ENCODE measurements at regions of chr17 and their contacts with region 1.

Region 1: DNA sequence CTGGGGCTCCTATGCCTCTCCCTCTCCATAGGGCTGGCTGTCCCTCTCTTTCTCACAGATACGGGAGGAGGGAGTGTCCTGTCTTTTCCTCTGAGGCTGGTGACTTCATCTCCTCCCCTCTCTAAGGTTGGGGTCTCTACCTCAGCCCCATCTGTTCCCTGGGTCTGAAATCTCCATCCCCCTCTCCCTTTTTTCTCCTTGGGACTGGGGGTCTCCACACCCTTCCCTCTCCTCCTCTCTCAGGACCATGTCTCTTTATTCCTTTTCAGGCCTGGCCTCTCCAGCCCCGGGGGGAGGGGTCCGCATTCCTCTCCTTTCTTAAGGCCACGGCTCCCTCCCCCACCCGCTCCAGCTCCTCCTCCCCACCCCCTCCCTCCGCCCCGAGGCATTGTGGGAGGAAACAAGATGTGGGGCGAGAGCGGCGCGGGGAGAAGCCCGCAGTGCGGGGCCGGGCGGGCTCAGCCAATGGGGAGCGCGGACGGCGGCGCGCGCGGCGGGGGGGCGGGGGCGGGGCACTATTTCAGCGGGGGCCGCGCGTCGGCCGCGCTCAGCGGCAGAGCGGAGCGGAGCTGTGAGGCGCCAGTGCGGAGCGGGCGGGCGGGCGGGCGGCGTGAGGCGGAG is at the start of gene DYNLL2:
- DNase-seq: peak; percentile 97
- H3K4me3 ChIP-seq: peak within 1 kb of the TSS; percentile 80 to 99 (median 98)
- H3K27ac ChIP-seq: peak within 1 kb of the TSS; percentile 93 to 99 (median 98)
- H3K4me1 ChIP-seq: peaks cover 0 to 46% (median 38%) of the 10 kb centered on the region in 4 donors
- H3K27me3 ChIP-seq: no peaks in the 10 kb centered on the region
- CTCF ChIP-seq: no peak
- EP300 ChIP-seq: no peak
- POLR2A ChIP-seq: no peak
- total RNA-seq, gene DYNLL2: 19.4 to 28.9 (median 22.8) TPM

Region 2: DNA sequence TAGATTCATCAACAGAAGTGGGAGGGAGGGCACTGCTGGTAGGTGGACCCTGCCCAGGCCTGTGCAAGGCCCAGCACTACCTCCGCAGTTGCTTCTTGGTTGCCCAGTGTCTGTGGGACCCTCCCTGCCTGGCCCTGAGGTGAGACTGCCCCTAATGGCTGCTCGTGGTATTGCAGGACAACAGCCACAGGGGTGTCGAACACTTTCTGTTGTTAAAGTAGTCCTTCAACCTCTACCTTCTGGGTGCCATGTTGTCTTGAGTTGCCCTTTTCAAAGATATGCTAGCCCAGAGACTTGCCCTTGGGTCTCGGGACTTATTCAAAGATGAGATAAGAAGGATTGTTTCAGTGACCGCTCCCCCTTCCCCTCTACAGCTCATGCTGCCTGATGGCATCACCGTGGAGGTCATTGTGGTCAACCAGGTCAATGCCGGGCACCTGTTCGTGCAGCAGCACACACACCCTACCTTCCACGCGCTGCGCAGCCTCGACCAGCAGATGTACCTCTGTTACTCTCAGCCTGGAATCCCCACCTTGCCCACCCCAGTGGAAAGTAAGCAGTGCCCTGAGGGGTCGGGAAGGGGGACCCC is 968.8 kb before region 1 on chr17:
- intact Hi-C with region 1: loop called (anchors 10 kb)
- DNase-seq: no peak
- H3K4me3 ChIP-seq: no peak overlapping the region
- H3K27ac ChIP-seq: peak overlapping the region in 3 of 4 donors; percentile 45 to 63 (median 46)
- H3K4me1 ChIP-seq: peaks cover 0 to 40% (median 31%) of the 10 kb centered on the region in 4 donors
- H3K27me3 ChIP-seq: no peaks in the 10 kb centered on the region
- CTCF ChIP-seq: peak; percentile 45 to 88 (median 77)
- EP300 ChIP-seq: no peak
- POLR2A ChIP-seq: no peak

Region 3: DNA sequence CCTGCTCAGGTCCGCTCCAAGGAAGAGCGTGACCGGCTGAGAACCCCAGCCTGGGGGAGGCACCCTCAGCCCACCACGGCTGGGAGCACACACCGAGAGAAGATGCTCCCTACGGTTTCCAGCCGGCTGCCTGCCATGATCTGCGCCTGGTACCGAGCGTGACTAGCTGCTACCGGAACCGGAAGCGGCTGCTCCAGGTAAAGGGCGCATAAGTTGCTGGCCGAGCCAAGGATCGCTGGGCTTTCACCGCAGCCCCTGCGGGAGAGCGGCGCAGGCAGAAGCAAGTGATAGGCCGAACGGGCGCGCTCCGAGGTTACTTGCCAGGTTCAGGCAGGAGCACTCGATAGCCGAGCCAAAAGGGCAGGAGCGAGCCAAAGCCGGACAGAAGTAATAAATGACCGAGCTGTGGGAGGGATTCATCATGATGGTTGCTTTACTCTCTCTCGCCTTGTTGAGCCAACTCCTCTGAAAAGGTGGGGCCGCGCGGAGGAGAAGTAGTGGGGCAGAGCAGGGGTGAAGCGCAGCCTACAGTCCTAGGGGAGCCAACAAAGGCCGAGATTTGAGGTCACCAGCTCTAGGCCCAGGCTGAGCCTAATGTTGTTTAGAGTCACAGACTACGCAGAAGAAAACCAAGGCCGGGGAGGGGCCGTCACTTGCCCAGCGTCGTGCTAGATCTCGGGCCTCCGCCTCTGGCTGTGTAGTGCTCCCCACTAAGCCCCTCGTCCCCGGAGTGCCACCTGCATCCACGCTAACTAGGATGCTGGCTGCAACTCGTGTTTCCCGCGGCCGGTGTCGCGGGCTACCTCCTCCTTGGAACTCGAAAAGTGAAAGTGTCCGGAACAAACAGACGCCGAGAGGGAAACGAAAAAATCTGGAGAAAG is 232.9 kb before region 1 on chr17 and contains the start of gene MRPS23:
- intact Hi-C with region 1: loop called (anchors 5 kb)
- DNase-seq: peak; percentile 100
- H3K4me3 ChIP-seq: peak within 1 kb of the TSS; percentile 63 to 97 (median 85)
- H3K27ac ChIP-seq: peak within 1 kb of the TSS; percentile 88 to 97 (median 94)
- H3K4me1 ChIP-seq: peaks cover 0 to 65% (median 55%) of the 10 kb centered on the region in 4 donors
- H3K27me3 ChIP-seq: no peaks in the 10 kb centered on the region
- CTCF ChIP-seq: no peak
- EP300 ChIP-seq: peak in 1 of 4 donors; percentile 79
- POLR2A ChIP-seq: peak; percentile 91 to 93
- total RNA-seq, gene MRPS23: 9.5 to 15.1 (median 13.3) TPM

Region 4: DNA sequence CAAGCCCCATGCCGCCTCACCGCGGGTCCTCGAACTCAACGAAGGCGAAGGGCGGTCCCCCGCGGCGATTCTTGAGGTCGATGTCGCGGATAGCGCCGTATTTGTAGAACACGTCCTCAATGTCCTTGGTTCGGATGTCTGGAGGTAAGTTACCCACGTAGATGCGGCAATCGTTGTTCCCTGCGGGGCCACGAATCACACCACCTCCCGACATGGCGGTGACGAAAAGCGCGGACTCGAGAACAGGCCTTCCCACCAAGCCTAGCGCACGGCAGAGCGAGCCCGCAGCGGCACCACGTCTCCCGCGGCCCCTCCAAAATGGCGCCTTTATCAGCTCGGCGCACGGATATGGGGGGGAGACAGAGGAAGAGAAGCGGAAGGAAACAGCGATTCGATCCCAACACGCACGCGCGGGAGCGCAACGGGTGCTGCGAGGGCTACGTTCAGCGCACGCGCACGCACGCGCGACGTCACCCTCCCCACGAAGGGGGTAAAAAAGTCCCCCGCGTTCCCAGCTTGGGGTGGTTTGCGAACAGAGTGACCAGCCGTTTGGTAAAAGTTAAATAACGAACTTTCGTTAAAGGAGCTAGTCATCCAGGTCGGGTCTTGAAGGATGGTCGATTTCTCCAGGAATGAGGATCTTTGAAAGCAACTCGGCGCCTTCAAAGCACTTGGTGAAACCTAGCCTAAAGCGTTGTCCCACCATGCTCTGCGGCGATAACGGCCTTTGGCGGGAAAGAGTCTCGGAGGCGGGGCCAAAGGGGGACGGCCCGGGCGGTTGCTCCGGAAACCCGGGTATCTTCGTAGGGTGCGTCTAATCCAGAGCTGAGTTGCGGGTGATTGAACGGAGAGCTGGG is 75.8 kb before region 1 on chr17 and contains the start of gene SRSF1:
- intact Hi-C with region 1: loop called (anchors 1 kb)
- DNase-seq: peak; percentile 99
- H3K4me3 ChIP-seq: peak within 1 kb of the TSS; percentile 78 to 93 (median 83)
- H3K27ac ChIP-seq: peak within 1 kb of the TSS; percentile 97 to 99 (median 98)
- H3K4me1 ChIP-seq: peaks cover 0 to 46% (median 42%) of the 10 kb centered on the region in 4 donors
- H3K27me3 ChIP-seq: no peaks in the 10 kb centered on the region
- CTCF ChIP-seq: no peak
- EP300 ChIP-seq: peak in 1 of 4 donors; percentile 4
- POLR2A ChIP-seq: peak; percentile 93
- total RNA-seq, gene SRSF1: 138 to 214 (median 151) TPM

Region 5: DNA sequence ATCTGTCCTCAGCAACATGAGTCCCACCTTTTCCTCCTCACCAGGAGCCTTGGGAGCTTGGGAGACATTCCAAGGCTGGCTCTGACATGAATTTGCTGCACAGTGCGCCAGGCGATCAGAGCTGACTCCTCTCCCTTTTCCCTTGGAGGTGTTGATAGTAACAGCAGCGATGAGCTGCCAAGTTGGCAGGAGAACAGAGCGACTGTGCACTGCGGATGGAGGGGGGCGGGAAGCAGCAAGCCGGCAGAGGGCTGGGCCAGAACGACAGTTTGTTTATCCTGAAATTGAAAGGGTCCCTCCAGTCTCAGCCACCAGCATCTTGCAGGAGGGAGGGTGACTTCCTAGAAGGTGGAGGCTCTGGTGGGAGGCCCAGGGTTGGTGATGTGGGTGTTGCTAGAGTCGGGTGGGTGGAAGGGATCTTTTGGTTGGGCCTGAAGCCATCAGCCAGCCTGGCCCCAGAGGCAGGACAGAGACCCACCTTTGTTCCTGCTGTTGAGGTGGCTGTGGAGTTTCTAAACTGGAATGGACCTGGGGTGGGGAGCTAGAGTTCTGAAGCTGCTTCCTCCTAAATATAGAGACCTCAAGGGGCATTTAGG is 22.3 kb before region 1 on chr17:
- intact Hi-C with region 1: loop called (anchors 2 kb)
- DNase-seq: peak; percentile 91
- H3K4me3 ChIP-seq: no peak overlapping the region
- H3K27ac ChIP-seq: peak overlapping the region in 3 of 4 donors; percentile 60 to 72 (median 72)
- H3K4me1 ChIP-seq: peaks cover 0 to 26% (median 16%) of the 10 kb centered on the region in 4 donors
- H3K27me3 ChIP-seq: no peaks in the 10 kb centered on the region
- CTCF ChIP-seq: no peak
- EP300 ChIP-seq: no peak
- POLR2A ChIP-seq: no peak